Activated CD4-positive, alpha-beta T cell treated with anti-CD3 and anti-CD28 coated beads for 36 hours (primary cell): ENCODE measurements at regions of chr9 and their contacts with region 1.

Region 1: DNA sequence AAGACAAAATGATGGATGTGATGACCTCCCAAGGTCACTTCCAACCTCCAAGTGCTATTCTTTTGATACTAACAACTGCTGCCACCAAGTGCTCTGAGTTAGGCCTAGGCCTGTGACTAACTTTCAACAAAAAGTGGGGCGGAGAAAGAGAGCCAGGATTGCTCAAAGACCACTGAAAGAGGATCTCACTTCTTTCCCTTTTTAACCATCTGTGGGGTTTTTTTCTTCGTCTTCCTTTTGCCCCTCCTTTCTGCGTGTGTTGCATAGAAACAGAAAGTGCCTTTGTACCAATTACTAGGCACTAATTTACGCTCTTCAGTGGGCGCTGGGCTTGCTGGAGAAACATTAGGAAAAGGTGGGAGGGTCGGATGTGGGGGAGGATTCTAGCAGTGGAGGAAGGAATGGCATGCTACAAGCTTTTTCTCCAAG is 8.0 kb downstream of the KLF9 start:
- DNase-seq: peak; percentile 62
- ATAC-seq: peak; percentile 76
- H3K4me3 Mint-ChIP-seq: peak overlapping the region; percentile 63
- H3K27ac Mint-ChIP-seq: peak overlapping the region; percentile 96
- H3K4me1 Mint-ChIP-seq: peaks cover 76% of the 10 kb centered on the region
- H3K27me3 Mint-ChIP-seq: no peaks in the 10 kb centered on the region

Region 2: GRCh38 chr9:70392189-70392588 is 14.3 kb before region 1 on chr9:
- CTCF ChIA-PET with region 1: interaction called, 15 read pairs
- POLR2A ChIA-PET with region 1: interaction called, 4 read pairs
- intact Hi-C with region 1: loop called in 1 of 2 experiments (anchors 2 kb)
- DNase-seq: peak; percentile 22
- ATAC-seq: no peak
- H3K4me3 Mint-ChIP-seq: no peak overlapping the region
- H3K27ac Mint-ChIP-seq: no peak overlapping the region
- H3K4me1 Mint-ChIP-seq: peaks cover 80% of the 10 kb centered on the region
- H3K27me3 Mint-ChIP-seq: no peaks in the 10 kb centered on the region

Region 3: DNA sequence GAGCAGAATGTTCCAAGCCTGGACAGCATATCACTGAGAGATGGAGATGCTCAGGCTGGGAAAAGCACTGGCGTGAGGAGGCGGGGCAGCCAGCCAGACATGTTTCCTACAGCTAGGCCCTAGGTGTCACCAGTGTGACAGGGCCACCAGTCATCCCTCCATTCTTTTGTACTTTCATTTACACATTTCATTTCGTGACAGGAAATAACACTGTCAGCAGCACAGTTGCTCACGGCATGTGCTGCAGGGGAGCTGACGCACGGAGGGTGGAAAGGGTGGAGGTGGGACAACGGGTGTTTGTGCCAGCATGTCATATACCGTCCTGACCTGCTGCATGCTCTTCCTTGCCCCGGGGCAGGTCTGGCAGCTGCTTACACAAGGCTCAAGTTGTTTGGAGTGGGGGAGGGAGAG is 1376.7 kb after region 1 on chr9:
- CTCF ChIA-PET with region 1: no interaction called
- POLR2A ChIA-PET with region 1: no interaction called
- intact Hi-C with region 1: loop called (anchors 5 to 10 kb)
- DNase-seq: peak; percentile 93
- ATAC-seq: peak; percentile 97
- H3K4me3 Mint-ChIP-seq: peak overlapping the region; percentile 68
- H3K27ac Mint-ChIP-seq: peak overlapping the region; percentile 98
- H3K4me1 Mint-ChIP-seq: peaks cover 48% of the 10 kb centered on the region
- H3K27me3 Mint-ChIP-seq: no peaks in the 10 kb centered on the region